ENCODE measurements at regions of chr20 and their contacts with region 1.

Region 1: GRCh38 chr20:11001767-11002540 is 328.2 kb upstream of the JAG1 start:
- DNase-seq: peak; percentile 99
- H3K4me3 ChIP-seq: no peak overlapping the region
- H3K27ac ChIP-seq: peak overlapping the region; percentile 89
- H3K4me1 ChIP-seq: peaks cover 35% of the 10 kb centered on the region
- H3K27me3 ChIP-seq: no peaks in the 10 kb centered on the region
- CTCF ChIP-seq: no peak

Region 2: DNA sequence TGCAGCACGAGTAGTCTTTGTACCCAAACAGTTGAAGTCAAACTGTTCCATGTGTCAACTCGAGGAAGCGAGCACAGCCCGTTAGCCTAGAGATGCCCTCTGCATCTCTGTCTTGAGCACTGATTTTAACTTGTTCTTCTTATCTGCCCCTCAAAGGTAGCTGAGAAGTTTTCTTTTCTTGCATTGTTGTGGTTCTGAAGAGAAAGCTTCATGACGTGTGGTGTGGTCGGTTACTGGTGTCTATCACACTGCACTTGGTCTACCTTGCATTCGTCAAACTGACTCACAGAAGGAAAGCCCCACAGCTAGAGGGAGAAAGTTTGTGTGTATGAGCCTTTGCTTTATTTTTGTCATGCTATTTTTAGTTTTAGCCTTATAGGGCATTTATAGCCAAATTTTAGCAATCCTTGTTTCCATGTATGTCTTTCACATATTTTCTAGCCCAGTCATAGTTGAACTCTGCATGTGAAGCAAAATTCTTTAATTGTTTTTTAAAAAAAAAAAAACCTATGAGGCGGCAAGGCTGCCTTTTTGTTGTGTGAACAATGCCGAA is 443.2 kb before region 1 on chr20:
- CTCF ChIA-PET with region 1: no interaction called
- dilution Hi-C with region 1: no loop called
- in situ Hi-C with region 1: no loop called
- intact Hi-C with region 1: loop called (anchors 5 kb)
- DNase-seq: peak; percentile 97
- H3K4me3 ChIP-seq: no peak overlapping the region
- H3K27ac ChIP-seq: peak overlapping the region; percentile 75
- H3K4me1 ChIP-seq: peaks cover 45% of the 10 kb centered on the region
- H3K27me3 ChIP-seq: no peaks in the 10 kb centered on the region
- CTCF ChIP-seq: no peak

Region 3: GRCh38 chr20:10848810-10849370 is 153.1 kb before region 1 on chr20:
- CTCF ChIA-PET with region 1: no interaction called
- dilution Hi-C with region 1: no loop called
- in situ Hi-C with region 1: no loop called
- intact Hi-C with region 1: loop called (anchors 5 kb)
- DNase-seq: peak; percentile 86
- H3K4me3 ChIP-seq: no peak overlapping the region
- H3K27ac ChIP-seq: peak overlapping the region; percentile 40
- H3K4me1 ChIP-seq: peaks cover 15% of the 10 kb centered on the region
- H3K27me3 ChIP-seq: no peaks in the 10 kb centered on the region
- CTCF ChIP-seq: no peak

Region 4: DNA sequence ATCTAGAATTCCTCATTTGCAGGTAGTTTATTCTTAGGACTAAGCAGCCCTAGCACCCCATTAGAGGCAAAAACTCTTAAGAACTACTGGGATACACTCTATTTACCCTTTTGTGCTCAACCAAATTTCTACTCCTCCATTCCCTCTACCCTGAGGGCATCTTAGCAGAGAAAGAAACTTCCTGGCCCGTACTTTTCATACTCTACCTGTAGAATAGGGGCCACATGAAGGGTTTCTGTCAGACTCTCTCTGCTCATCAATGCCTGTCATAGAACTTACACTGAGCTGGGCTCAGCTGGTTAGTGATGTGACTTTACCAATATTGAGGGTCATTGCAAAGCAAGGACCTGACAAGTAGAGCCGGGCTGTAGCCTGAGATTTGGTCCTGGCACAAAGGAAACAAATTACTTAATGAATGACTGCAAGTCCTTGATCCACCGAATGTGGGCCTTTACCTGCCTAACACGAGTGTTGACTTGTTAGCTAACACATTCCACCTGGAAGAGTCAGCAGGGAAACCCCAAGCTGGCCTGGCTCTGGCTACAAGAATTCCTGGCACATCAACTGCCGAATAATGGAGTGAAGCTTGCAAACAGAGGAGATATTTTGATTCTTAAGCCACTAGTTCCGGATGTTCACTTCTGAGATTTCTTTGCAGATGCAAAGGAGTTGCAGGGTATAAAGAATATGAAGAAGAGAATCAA is 47.7 kb before region 1 on chr20:
- CTCF ChIA-PET with region 1: no interaction called
- dilution Hi-C with region 1: no loop called
- in situ Hi-C with region 1: no loop called
- intact Hi-C with region 1: loop called (anchors 2 kb)
- DNase-seq: peak; percentile 96
- H3K4me3 ChIP-seq: no peak overlapping the region
- H3K27ac ChIP-seq: peak overlapping the region; percentile 77
- H3K4me1 ChIP-seq: peaks cover 42% of the 10 kb centered on the region
- H3K27me3 ChIP-seq: no peaks in the 10 kb centered on the region
- CTCF ChIP-seq: no peak

Region 5: GRCh38 chr20:10987651-10988383 is 14.1 kb before region 1 on chr20:
- CTCF ChIA-PET with region 1: no interaction called
- dilution Hi-C with region 1: no loop called
- in situ Hi-C with region 1: no loop called
- intact Hi-C with region 1: no loop called
- DNase-seq: peak; percentile 87
- H3K4me3 ChIP-seq: no peak overlapping the region
- H3K27ac ChIP-seq: no peak overlapping the region
- H3K4me1 ChIP-seq: peaks cover 19% of the 10 kb centered on the region
- H3K27me3 ChIP-seq: no peaks in the 10 kb centered on the region
- CTCF ChIP-seq: no peak

Region 6: GRCh38 chr20:11140359-11140758 is 138.4 kb after region 1 on chr20:
- CTCF ChIA-PET with region 1: no interaction called
- dilution Hi-C with region 1: no loop called
- in situ Hi-C with region 1: no loop called
- intact Hi-C with region 1: loop called (anchors 5 kb)
- DNase-seq: peak; percentile 98
- H3K4me3 ChIP-seq: no peak overlapping the region
- H3K27ac ChIP-seq: peak overlapping the region; percentile 74
- H3K4me1 ChIP-seq: peaks cover 21% of the 10 kb centered on the region
- H3K27me3 ChIP-seq: no peaks in the 10 kb centered on the region
- CTCF ChIP-seq: peak in 1 of 2 donors; percentile 42

Measured in mammary epithelial cell (primary cell).